T-cell (primary cell): ENCODE measurements at regions of chr7 and their contacts with region 1.

Region 1: GRCh38 chr7:12322284-12322902 is 81.3 kb downstream of the VWDE start:
- DNase-seq: peak in 9 of 35 experiments; percentile 0 to 66 (median 7)
- ATAC-seq: no peak
- H3K4me3 ChIP-seq: no peak overlapping the region
- H3K4me3 Mint-ChIP-seq: no peak overlapping the region
- H3K27ac ChIP-seq: no peak overlapping the region
- H3K27ac Mint-ChIP-seq: no peak overlapping the region
- H3K4me1 ChIP-seq: no peaks in the 10 kb centered on the region
- H3K4me1 Mint-ChIP-seq: peaks cover 0 to 1% (median 0%) of the 10 kb centered on the region in 3 donors
- H3K27me3 ChIP-seq: no peaks in the 10 kb centered on the region
- H3K27me3 Mint-ChIP-seq: peaks cover 0 to 3% of the 10 kb centered on the region in 2 donors

Region 2: GRCh38 chr7:12064586-12065127 is 257.7 kb before region 1 on chr7:
- CTCF ChIA-PET with region 1: interaction called, 5 to 14 read pairs
- POLR2A ChIA-PET with region 1: no interaction called
- DNase-seq: no peak
- ATAC-seq: no peak
- H3K4me3 ChIP-seq: no peak overlapping the region
- H3K4me3 Mint-ChIP-seq: no peak overlapping the region
- H3K27ac ChIP-seq: no peak overlapping the region
- H3K27ac Mint-ChIP-seq: no peak overlapping the region
- H3K4me1 ChIP-seq: no peaks in the 10 kb centered on the region
- H3K4me1 Mint-ChIP-seq: no peaks in the 10 kb centered on the region
- H3K27me3 ChIP-seq: no peaks in the 10 kb centered on the region
- H3K27me3 Mint-ChIP-seq: no peaks in the 10 kb centered on the region